Body of pancreas (tissue), 4 donors: ENCODE measurements at regions of chr7 and their contacts with region 1.

Region 1: DNA sequence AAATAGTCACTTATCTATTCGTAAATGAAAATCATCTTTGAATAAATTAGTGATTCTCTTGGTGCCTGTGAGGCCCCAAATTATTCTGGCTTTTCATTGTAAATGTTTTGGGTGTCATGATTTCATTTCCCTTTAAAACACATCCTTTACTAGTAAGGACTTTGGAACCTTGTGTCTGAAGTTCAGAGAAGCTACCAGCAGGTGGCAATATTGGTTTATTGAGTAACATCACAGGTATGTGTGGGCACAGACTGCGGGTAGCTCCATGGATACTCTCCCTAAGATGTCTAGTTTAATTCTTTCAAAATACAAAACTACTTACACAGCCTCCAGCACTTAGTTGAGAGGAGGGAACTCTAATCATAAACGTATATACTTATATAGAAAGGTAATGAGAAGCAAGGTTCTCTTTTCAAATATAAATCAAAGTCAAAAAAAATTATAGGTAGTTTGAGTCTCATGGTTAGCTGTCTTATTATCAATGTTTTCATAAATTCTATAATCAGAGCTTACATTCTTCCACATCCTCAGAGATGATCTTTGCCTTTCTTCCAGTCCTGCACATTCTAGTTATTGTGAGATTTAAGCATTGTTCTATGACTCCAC is 449.6 kb downstream of the GRM8 start:
- DNase-seq: peak; percentile 62 to 78 (median 70)
- ATAC-seq: peak; percentile 64
- H3K4me3 ChIP-seq: no peak overlapping the region
- H3K27ac ChIP-seq: no peak overlapping the region
- H3K4me1 ChIP-seq: no peaks in the 10 kb centered on the region
- H3K27me3 ChIP-seq: no peaks in the 10 kb centered on the region
- CTCF ChIP-seq: peak; percentile 42 to 78 (median 67)
- POLR2A ChIP-seq: no peak

Region 2: GRCh38 chr7:126937171-126937570 is 134.0 kb after region 1 on chr7:
- intact Hi-C with region 1: no loop called
- DNase-seq: peak in 1 of 4 donors; percentile 3
- ATAC-seq: peak; percentile 41
- H3K4me3 ChIP-seq: no peak overlapping the region
- H3K27ac ChIP-seq: peak overlapping the region in 2 of 4 donors; percentile 28 to 42
- H3K4me1 ChIP-seq: peaks cover 29% of the 10 kb centered on the region
- H3K27me3 ChIP-seq: no peaks in the 10 kb centered on the region
- CTCF ChIP-seq: no peak
- POLR2A ChIP-seq: no peak

Region 3: DNA sequence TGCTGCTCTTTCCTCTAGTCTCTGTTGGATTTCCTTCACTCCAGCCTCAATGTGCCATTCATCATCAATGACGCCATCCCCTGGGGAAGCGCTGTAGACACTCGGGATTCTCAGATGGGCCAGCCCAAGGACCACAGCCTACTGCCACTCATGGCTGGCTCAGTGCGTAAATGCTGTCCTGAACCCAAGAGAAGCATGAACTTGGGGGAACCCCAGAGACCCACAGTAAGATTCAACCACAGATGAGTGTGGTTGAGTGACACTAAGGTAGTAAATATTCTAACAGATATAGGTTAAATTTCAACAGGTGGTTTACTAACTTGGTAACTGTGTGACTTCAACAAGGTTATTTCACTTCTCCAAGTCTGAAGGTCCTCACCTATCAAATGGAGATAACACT is 145.5 kb after region 1 on chr7:
- intact Hi-C with region 1: no loop called
- DNase-seq: no peak
- ATAC-seq: no peak
- H3K4me3 ChIP-seq: no peak overlapping the region
- H3K27ac ChIP-seq: no peak overlapping the region
- H3K4me1 ChIP-seq: no peaks in the 10 kb centered on the region
- H3K27me3 ChIP-seq: no peaks in the 10 kb centered on the region
- CTCF ChIP-seq: no peak
- POLR2A ChIP-seq: no peak

Region 4: GRCh38 chr7:127253281-127254162 is 450.4 kb after region 1 on chr7:
- intact Hi-C with region 1: loop called (anchors 10 kb)
- DNase-seq: peak; percentile 60 to 78 (median 63)
- ATAC-seq: peak; percentile 83
- H3K4me3 ChIP-seq: peak overlapping the region; percentile 55 to 85
- H3K27ac ChIP-seq: peak overlapping the region in 2 of 4 donors; percentile 38 to 62
- H3K4me1 ChIP-seq: peaks cover 25% of the 10 kb centered on the region
- H3K27me3 ChIP-seq: peaks cover 0 to 3% of the 10 kb centered on the region in 2 donors
- CTCF ChIP-seq: peak; percentile 65 to 94 (median 84)
- POLR2A ChIP-seq: no peak